ENCODE measurements at regions of chr10 and their contacts with region 1.

Region 1: DNA sequence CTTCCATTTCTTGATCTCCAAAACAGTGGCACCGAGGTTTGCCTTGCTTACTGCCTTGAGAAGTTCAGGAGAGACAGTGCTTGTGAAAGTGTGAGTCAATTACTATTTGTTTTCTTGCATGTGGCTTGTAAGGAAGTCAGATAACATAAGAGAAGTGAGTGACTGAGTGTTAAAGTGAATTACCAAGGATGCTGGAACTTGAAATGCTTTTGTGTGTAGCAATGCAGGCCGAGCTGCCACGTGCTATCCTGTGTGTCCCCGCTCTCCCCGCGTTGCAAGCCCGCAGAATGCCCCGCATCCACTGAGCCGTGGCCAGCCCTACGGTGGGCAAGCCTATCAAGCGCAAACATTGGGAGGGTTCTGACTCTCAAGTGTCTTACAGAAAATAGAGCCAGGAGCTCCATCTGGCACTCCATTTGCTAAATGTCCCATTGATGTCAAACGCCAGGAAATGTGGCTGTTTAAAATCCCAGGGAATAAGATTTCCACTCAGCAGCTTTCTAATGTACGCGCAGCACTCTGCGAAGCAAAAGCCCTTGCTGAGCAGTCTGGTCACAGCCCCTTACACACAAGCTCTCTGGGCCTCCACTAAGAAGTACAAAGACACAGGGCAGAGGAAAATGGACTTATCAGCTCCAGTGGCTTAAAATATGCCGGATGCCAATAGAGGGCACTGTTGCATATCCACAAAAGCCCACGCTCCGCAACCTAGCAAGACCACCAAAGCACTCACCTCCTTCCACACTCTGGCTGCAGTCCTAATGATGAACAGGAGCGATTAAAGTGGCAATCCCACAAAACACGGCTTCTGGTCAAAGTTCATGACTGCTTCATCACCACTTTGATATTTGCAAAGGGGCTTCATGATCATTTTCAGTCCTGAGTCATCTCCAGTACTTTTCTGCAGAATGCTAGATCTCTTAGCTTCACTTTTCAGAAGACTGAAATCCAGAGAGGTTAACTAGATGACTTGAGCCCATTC is 158.0 kb upstream of the ITGB1 start:
- DNase-seq: peak in 4 of 5 donors; percentile 43 to 66 (median 54)
- H3K4me3 ChIP-seq: peak overlapping the region; percentile 21 to 36
- H3K4me3 Mint-ChIP-seq: peak overlapping the region; percentile 74 to 92 (median 86)
- H3K27ac ChIP-seq: peak overlapping the region; percentile 74
- H3K27ac Mint-ChIP-seq: peak overlapping the region; percentile 91 to 98 (median 96)
- H3K4me1 ChIP-seq: peaks cover 99% of the 10 kb centered on the region
- H3K4me1 Mint-ChIP-seq: peaks cover 77 to 100% (median 86%) of the 10 kb centered on the region in 4 donors
- H3K27me3 ChIP-seq: no peaks in the 10 kb centered on the region
- H3K27me3 Mint-ChIP-seq: no peaks in the 10 kb centered on the region

Region 2: GRCh38 chr10:32600317-32600716 is 515.7 kb before region 1 on chr10:
- CTCF ChIA-PET with region 1: no interaction called
- POLR2A ChIA-PET with region 1: no interaction called
- intact Hi-C with region 1: no loop called
- DNase-seq: no peak
- H3K4me3 ChIP-seq: no peak overlapping the region
- H3K4me3 Mint-ChIP-seq: no peak overlapping the region
- H3K27ac ChIP-seq: no peak overlapping the region
- H3K27ac Mint-ChIP-seq: no peak overlapping the region
- H3K4me1 ChIP-seq: no peaks in the 10 kb centered on the region
- H3K4me1 Mint-ChIP-seq: peaks cover 0 to 5% (median under 1%) of the 10 kb centered on the region in 4 donors
- H3K27me3 ChIP-seq: no peaks in the 10 kb centered on the region
- H3K27me3 Mint-ChIP-seq: no peaks in the 10 kb centered on the region

Region 3: GRCh38 chr10:32958085-32959005 is 157.7 kb before region 1 on chr10 and contains the start of gene ITGB1:
- CTCF ChIA-PET with region 1: interaction called, 5 read pairs
- POLR2A ChIA-PET with region 1: interaction called, 56 read pairs
- intact Hi-C with region 1: loop called (anchors 2 kb)
- DNase-seq: peak; percentile 83 to 85 (median 85)
- H3K4me3 ChIP-seq: peak within 1 kb of the TSS; percentile 76 to 88
- H3K4me3 Mint-ChIP-seq: peak within 1 kb of the TSS; percentile 87 to 96 (median 92)
- H3K27ac ChIP-seq: peak within 1 kb of the TSS; percentile 69
- H3K27ac Mint-ChIP-seq: peak within 1 kb of the TSS; percentile 90 to 96 (median 94)
- H3K4me1 ChIP-seq: peaks cover 35% of the 10 kb centered on the region
- H3K4me1 Mint-ChIP-seq: peaks cover 41 to 61% (median 48%) of the 10 kb centered on the region in 4 donors
- H3K27me3 ChIP-seq: no peaks in the 10 kb centered on the region
- H3K27me3 Mint-ChIP-seq: no peaks in the 10 kb centered on the region
- total RNA-seq, gene ITGB1: 420 to 435 TPM

Region 4: GRCh38 chr10:33032654-33033151 is 83.3 kb before region 1 on chr10:
- CTCF ChIA-PET with region 1: interaction called, 8 read pairs
- POLR2A ChIA-PET with region 1: interaction called, 80 read pairs
- intact Hi-C with region 1: loop called (anchors 1 kb)
- DNase-seq: no peak
- H3K4me3 ChIP-seq: no peak overlapping the region
- H3K4me3 Mint-ChIP-seq: peak overlapping the region in 5 of 8 donors; percentile 6 to 50 (median 22)
- H3K27ac ChIP-seq: no peak overlapping the region
- H3K27ac Mint-ChIP-seq: peak overlapping the region; percentile 43 to 90 (median 81)
- H3K4me1 ChIP-seq: peaks cover 57% of the 10 kb centered on the region
- H3K4me1 Mint-ChIP-seq: peaks cover 38 to 55% (median 47%) of the 10 kb centered on the region in 4 donors
- H3K27me3 ChIP-seq: no peaks in the 10 kb centered on the region
- H3K27me3 Mint-ChIP-seq: no peaks in the 10 kb centered on the region

Region 5: DNA sequence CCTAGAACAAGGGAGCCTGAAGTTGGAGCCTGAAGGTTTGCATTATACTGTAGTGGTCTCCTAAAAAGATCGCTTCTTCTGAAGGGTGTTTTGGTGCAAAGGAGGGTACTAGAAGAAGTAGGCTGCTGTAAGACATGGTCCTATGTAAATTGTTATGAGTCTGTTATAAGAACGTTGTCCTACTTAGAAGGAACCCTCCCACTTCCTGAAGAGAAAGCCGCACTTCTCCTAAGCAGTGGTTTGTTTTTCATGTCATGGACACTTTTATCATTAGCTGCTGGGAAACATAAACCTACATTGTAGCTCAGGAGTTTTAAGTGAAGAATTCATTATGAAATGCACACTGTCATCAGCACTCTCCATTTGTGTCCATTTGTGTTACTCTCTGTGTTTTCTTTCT is 28.9 kb before region 1 on chr10:
- CTCF ChIA-PET with region 1: interaction called, 4 read pairs
- POLR2A ChIA-PET with region 1: interaction called, 29 read pairs
- intact Hi-C with region 1: loop called (anchors 2 kb)
- DNase-seq: peak in 4 of 5 donors; percentile 24 to 46 (median 38)
- H3K4me3 ChIP-seq: no peak overlapping the region
- H3K4me3 Mint-ChIP-seq: peak overlapping the region in 7 of 8 donors; percentile 14 to 77 (median 65)
- H3K27ac ChIP-seq: peak overlapping the region; percentile 36
- H3K27ac Mint-ChIP-seq: peak overlapping the region; percentile 78 to 94 (median 87)
- H3K4me1 ChIP-seq: peaks cover 52% of the 10 kb centered on the region
- H3K4me1 Mint-ChIP-seq: peaks cover 42 to 81% (median 64%) of the 10 kb centered on the region in 4 donors
- H3K27me3 ChIP-seq: no peaks in the 10 kb centered on the region
- H3K27me3 Mint-ChIP-seq: peaks cover 0 to 1% of the 10 kb centered on the region in 2 donors

Region 6: DNA sequence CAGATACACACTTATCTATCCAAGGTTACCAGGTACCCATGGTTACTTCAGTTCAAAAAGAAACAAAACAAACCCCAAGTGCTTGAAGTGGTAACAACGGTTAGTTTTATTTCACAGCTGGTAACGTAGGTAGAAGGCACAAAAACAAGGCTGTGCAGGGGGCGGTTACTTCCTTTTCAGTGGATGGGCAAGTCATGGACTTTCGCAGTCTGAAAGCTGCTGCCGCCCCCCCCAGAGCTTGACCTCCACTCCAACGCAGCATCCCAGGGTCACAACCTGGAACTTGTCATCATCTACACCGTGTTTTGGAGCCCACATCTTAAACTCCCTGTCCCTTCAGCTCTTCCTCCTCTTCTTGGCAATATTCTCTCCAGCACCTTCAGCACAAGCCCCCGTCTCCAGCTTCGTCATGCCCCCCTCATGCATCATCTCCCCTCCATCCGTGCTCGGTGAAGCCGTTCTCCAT is 23.2 kb after region 1 on chr10:
- CTCF ChIA-PET with region 1: interaction called, 346 read pairs
- POLR2A ChIA-PET with region 1: interaction called, 2,213 read pairs
- intact Hi-C with region 1: loop called (anchors 1 kb)
- DNase-seq: peak; percentile 94 to 97 (median 95)
- H3K4me3 ChIP-seq: peak overlapping the region; percentile 10 to 54
- H3K4me3 Mint-ChIP-seq: peak overlapping the region; percentile 57 to 81 (median 75)
- H3K27ac ChIP-seq: peak overlapping the region; percentile 84
- H3K27ac Mint-ChIP-seq: peak overlapping the region; percentile 98 to 100 (median 100)
- H3K4me1 ChIP-seq: peaks cover 92% of the 10 kb centered on the region
- H3K4me1 Mint-ChIP-seq: peaks cover 63 to 93% (median 80%) of the 10 kb centered on the region in 4 donors
- H3K27me3 ChIP-seq: no peaks in the 10 kb centered on the region
- H3K27me3 Mint-ChIP-seq: no peaks in the 10 kb centered on the region

Region 7: DNA sequence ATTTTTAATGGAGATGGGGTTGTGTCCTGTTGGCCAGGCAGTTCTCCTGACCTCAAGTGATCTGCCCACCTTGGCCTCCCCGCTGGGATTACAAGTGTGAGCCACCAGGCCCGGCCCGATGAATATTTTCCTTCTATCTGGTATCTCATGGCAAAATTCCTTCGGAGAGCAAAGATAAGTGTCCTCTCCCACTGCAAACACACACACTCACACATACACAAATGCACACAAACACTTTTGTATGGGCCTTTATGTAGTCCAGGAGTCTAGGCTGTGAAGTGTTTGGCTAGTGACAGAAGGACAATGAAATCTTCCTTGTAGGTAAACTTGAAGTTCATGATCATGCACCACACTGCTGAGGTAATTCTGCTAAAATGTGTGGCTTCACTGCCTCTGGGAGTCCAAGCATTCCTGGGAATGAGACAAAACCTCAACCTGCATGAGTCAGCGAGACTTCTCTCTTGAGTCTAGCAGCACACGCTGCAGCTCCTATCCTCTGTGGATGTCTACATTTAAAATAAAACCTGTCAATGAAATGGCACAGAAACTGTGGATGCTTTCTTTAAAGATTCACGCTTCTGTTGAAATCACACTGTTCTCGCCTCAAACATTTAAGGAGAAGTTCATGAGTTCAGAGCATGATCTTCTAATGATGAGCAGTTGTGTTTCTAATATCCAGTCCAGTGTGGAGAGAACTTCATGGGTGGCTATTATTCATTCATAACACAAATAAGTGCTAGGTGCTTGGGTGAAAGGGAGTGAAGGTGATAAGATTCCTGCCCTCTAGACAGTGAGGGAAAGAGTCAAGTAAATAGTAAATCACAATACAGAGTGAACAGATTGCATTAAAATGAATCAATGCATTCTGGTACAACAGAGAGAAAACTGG is 122.0 kb after region 1 on chr10:
- CTCF ChIA-PET with region 1: no interaction called
- POLR2A ChIA-PET with region 1: no interaction called
- intact Hi-C with region 1: no loop called
- DNase-seq: no peak
- H3K4me3 ChIP-seq: no peak overlapping the region
- H3K4me3 Mint-ChIP-seq: no peak overlapping the region
- H3K27ac ChIP-seq: no peak overlapping the region
- H3K27ac Mint-ChIP-seq: peak overlapping the region in 1 of 7 donors; percentile 57
- H3K4me1 ChIP-seq: no peaks in the 10 kb centered on the region
- H3K4me1 Mint-ChIP-seq: peaks cover 0 to 1% (median 0%) of the 10 kb centered on the region in 4 donors
- H3K27me3 ChIP-seq: no peaks in the 10 kb centered on the region
- H3K27me3 Mint-ChIP-seq: peaks cover 2 to 3% of the 10 kb centered on the region in 2 donors

Measured in CD4-positive, alpha-beta memory T cell (primary cell).